Left cardiac atrium (tissue), 4 donors: ENCODE measurements at regions of chr3 and their contacts with region 1.

Region 1: DNA sequence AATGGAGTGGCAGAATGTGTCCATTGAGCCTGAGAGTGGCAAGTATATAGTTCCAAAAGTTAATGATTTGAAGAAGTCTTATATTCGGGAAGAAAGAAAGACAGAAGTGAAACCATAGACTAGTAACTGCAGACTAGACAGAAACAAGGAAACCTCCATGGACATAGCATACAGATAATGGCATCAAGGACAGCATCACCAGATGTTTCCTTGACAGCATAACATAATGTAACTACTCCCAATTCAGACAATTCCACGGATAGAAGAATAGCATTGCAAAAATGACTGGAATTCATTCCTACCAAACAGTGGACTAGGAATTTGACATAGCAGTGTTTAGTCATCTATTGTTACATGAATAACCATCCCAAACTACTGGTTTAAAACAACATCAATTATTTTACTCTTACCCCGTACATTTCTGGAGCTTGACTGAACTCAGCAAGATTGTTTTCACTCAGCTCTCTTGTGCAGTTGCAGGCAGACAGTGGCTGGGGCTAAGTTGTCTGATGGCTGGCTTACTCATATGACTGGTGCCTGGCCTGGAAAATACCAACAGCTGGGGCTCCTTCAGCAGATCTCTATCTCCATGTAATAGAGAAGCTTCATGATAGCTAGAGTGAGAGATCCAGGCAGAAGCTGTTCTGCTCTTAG is 109.7 kb upstream of the GADL1 start:
- DNase-seq: no peak
- ATAC-seq: peak in 1 of 2 donors; percentile 75

Region 2: DNA sequence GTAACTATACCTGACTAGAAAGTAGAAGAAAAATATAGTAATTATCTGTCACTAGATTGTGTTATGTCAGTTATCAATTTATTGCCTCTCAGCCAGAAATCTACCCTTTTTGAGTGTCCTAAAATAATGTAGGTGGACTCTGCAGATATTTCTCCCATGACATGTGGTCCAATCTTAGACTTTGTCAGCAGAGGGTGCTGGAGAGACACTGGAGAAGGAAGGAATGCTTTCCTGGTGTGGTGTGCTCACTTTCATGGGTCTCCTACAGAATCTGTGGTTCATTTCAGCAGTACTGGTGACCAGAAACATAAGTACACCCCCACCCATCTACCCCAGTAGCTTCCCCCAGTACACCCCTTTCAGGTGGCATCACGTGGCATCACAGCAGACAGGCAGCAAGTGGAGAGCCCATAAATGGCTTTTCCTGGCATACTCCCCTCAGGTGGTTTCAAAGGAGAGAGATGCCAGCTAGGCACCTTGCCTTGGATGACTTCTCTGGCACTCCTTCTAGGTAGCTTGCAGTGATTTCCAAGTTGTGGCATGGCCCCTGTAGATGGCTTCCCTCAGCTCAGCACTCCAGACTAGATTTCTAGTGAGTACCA is 224.4 kb before region 1 on chr3:
- intact Hi-C with region 1: loop called in 1 of 2 experiments (anchors 10 kb)
- DNase-seq: no peak
- ATAC-seq: no peak